Naive thymus-derived CD4-positive, alpha-beta T cell (primary cell): ENCODE measurements at regions of chrX and their contacts with region 1.

Region 1: DNA sequence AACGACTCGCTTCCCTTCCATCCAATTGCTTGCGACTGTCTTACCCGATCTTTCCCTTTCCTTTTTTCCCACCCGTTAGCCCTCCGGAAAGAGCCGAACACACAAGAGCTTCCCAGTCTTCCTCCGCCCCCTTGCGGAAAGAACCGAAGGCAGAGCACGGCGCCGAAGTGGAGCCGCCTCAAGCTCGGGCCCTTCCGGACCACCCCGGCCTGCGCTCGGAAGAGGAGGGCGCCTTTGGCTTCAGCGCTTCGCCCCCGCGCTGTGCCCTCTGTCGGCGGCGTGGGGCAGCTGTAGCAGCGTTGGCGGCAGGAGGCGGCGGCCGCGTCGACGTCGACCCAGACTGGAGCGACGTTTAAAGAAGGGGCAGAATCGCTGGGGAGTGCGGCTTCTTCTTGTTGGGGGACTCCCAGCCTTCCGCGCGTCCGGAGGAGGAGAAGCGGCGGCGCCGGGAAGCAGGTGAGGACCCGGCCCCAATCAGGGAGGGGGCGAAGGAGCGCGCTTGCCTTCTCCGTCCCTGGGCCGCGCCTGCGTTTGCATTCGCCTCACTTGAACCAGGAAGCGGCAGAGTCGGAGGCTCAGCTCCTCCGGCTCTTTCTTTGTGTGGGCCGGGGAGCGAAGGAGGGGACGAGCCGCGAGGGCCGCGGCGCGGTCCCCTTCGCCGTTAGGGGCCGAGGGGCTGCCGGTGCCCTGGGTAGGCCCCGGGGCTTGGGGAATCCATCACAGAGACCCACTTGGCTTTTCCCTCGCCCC is at the start of gene ZBTB33:
- DNase-seq: peak; percentile 69 to 88 (median 82)
- ATAC-seq: peak; percentile 100
- H3K4me3 ChIP-seq: peak within 1 kb of the TSS; percentile 79
- H3K4me3 Mint-ChIP-seq: peak within 1 kb of the TSS; percentile 84 to 97 (median 94)
- H3K27ac ChIP-seq: peak within 1 kb of the TSS; percentile 96
- H3K27ac Mint-ChIP-seq: peak within 1 kb of the TSS; percentile 93 to 98 (median 96)
- H3K4me1 ChIP-seq: peaks cover 0 to 7% of the 10 kb centered on the region in 2 donors
- H3K4me1 Mint-ChIP-seq: peaks cover 6 to 42% (median 28%) of the 10 kb centered on the region in 7 donors
- H3K27me3 ChIP-seq: no peaks in the 10 kb centered on the region
- H3K27me3 Mint-ChIP-seq: peaks cover 0 to 4% (median 0%) of the 10 kb centered on the region in 5 donors
- total RNA-seq, gene ZBTB33: 15.3 to 30.7 (median 26.3) TPM

Region 2: DNA sequence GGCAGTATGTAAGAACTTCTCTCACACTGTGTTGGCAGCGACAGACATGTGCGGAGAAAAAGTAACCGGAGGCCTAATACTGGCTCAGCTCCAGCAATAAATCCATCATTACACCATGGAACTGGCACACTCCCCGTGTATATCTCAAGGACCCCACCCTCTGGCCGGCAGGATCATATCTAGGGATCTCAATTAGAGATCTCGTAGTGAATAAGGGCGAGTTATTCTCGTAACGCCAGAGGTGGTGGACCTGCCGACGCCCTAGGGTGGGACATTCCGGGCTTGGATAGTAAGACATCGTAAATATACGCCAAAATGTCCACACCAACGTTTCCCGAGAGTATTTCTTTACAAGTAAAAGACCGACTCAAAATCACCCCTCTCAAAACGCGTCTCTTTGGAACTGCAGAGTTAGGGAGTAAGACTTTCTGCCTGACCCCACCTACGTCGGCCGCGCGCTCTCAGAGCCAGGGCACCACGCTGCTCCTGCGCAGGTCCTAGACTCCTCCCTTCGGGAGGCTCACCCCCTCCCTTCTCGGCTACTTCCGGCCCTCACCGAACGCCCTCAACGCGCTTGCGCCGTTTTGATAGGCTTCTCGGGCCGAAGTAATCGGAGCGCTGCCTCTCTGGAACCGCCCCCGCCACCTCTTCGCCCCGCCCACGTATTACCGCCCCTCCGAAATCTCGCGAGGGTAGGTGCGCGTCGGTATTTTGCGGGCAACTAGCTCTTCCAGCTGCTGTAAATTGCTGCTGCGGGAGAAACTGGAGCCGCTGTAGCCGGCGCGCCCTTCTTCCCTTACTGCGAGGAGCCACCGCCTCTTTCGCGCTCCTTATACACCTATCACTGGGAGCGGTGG is 1905.1 kb before region 1 on chrX and contains the start of gene WDR44:
- CTCF ChIA-PET with region 1: no interaction called
- POLR2A ChIA-PET with region 1: no interaction called
- intact Hi-C with region 1: loop called in 1 of 2 experiments (anchors 5 kb)
- DNase-seq: peak; percentile 79 to 95 (median 92)
- ATAC-seq: peak; percentile 95
- H3K4me3 ChIP-seq: peak within 1 kb of the TSS; percentile 87
- H3K4me3 Mint-ChIP-seq: peak within 1 kb of the TSS; percentile 87 to 99 (median 98)
- H3K27ac ChIP-seq: peak within 1 kb of the TSS; percentile 93
- H3K27ac Mint-ChIP-seq: peak within 1 kb of the TSS; percentile 92 to 99 (median 96)
- H3K4me1 ChIP-seq: peaks cover 19 to 24% of the 10 kb centered on the region in 2 donors
- H3K4me1 Mint-ChIP-seq: peaks cover 5 to 40% (median 36%) of the 10 kb centered on the region in 7 donors
- H3K27me3 ChIP-seq: no peaks in the 10 kb centered on the region
- H3K27me3 Mint-ChIP-seq: no peaks in the 10 kb centered on the region
- total RNA-seq, gene WDR44: 12.0 to 19.0 (median 17.0) TPM

Region 3: DNA sequence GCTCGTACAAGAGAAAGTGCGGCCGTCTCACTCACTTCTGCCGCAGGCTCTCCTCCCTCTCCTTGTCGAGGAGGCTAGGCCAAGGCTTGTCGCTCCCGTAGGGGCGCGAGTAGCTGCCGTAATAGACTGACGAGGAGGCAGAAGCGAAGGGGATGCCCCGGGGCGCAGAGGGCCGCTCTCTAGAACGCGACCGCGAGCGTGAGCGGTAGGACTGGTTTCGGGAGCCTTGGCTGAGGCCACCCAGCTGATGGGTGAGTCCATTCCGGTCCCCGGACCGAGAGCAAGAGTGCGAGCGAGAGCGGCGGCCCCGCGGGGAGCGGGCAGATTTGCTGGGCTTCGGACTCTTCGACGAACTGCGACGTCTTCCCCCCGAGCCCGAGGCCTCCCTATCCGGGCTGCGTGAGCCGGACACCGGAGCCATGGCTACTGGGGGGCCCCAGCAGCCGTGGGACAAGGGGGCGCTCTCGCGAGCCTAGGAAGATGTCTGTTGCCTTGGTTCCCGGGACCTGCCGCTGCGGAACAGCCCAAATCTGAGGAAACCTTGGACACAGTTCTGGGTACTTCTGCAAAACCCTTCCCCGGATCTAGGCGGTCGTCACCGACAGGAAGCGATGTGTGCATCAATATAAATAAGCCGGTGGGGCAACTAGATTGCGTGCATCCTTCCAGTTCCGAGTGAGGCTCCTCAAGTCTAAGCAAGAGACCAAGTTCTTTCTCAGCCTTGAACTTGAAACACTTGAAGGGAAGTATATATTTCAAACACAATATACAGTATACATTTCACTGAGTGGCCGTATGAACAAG is 307.3 kb before region 1 on chrX and contains the start of gene NKAP:
- CTCF ChIA-PET with region 1: no interaction called
- POLR2A ChIA-PET with region 1: no interaction called
- intact Hi-C with region 1: loop called (anchors 2 kb)
- DNase-seq: peak; percentile 53 to 84 (median 79)
- ATAC-seq: peak; percentile 95
- H3K4me3 ChIP-seq: peak within 1 kb of the TSS; percentile 84
- H3K4me3 Mint-ChIP-seq: peak within 1 kb of the TSS; percentile 84 to 100 (median 97)
- H3K27ac ChIP-seq: peak within 1 kb of the TSS; percentile 97
- H3K27ac Mint-ChIP-seq: peak within 1 kb of the TSS; percentile 84 to 99 (median 94)
- H3K4me1 ChIP-seq: peaks cover 8 to 15% of the 10 kb centered on the region in 2 donors
- H3K4me1 Mint-ChIP-seq: peaks cover 13 to 30% (median 22%) of the 10 kb centered on the region in 7 donors
- H3K27me3 ChIP-seq: no peaks in the 10 kb centered on the region
- H3K27me3 Mint-ChIP-seq: peaks cover 0 to 2% (median 2%) of the 10 kb centered on the region in 5 donors
- total RNA-seq, gene NKAP: 9.7 to 19.3 (median 14.9) TPM

Region 4: DNA sequence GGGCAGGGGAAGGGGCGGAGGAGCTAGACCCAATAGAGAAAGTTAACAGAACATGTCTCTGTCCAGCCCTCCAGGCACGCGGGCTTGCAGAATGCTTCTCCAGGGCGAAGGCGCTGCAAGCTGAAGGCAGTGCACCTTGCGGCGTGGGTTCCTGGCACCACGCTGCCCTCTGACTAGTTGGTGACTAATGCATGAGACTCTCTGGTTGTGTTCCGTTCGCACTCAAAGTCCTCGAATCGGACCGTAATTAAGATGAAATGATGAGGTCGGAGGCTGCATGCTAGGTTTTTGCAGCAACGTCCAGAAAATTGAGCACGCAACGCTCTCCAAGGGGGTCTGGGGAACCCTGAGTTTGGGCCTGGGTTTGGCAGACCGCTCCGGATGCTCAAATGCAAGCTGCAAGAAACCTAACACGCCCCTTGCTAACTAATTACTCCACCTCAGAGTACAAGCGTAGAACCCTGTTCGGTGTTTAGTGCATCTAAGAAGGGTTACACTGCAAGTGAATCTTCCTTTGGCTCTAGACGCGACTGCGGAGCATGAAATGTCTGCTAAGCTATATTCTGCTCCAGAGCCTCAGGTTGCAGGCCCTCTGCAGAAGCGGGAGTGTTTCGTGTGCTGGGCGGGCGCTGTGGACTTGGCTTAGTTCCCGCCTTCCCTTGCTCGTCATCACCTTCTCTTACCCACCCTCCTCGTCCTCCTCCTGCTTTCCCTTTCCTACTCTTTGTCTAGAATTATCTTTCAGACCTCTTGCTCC is 250.0 kb before region 1 on chrX:
- CTCF ChIA-PET with region 1: no interaction called
- POLR2A ChIA-PET with region 1: no interaction called
- intact Hi-C with region 1: no loop called
- DNase-seq: no peak
- ATAC-seq: no peak
- H3K4me3 ChIP-seq: no peak overlapping the region
- H3K4me3 Mint-ChIP-seq: peak overlapping the region; percentile 14 to 86 (median 67)
- H3K27ac ChIP-seq: no peak overlapping the region
- H3K27ac Mint-ChIP-seq: peak overlapping the region in 1 of 9 donors; percentile 59
- H3K4me1 ChIP-seq: no peaks in the 10 kb centered on the region
- H3K4me1 Mint-ChIP-seq: peaks cover 0 to 18% (median 9%) of the 10 kb centered on the region in 7 donors
- H3K27me3 ChIP-seq: peaks cover 0 to 5% of the 10 kb centered on the region in 2 donors
- H3K27me3 Mint-ChIP-seq: peaks cover 32 to 73% (median 52%) of the 10 kb centered on the region in 5 donors

Region 5: DNA sequence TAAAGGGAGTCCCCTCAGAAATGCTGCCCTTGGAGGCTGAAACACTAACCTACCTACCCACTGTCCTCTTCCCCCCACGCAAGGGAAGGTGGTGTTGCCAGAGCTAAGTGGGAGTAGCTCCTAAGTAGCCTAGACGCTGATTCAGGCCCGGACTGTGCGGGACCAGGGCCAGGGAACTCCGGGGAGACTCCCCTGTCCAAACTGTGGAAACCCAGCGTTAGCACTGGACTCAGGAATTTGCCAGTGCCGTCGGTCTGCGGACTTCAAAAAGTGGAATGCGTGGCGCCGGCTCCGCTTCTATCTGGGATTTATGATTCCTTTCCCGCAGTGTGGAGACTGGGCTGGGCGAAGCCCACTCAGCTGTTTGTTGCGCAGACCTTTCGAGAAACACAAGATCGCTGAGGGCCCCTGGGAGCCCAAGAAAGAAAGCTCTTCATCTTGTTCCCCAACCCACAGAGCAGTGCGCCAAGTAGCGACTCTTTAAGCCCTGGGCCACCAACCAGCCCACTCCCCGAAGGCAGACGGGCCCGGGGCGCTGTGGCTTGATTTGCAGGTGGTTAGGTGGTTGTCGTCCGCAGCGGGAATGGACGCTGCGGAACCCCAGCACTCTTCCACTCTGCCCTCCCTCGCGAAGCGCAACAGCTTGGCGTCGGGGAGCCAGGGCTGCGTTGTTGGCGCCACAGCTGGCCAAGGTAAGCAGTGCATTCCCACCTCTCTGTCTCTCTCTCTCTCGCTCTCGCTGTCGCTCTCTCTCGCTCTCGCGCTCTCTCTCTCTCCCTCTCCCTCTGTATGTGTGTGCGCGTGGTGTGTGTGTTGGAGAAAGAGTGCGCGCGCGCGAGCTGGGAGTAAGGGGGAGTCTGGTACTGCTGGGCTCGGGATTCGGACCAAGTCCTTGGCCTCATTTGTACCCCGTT is 58.5 kb after region 1 on chrX:
- CTCF ChIA-PET with region 1: interaction called, 8 read pairs
- POLR2A ChIA-PET with region 1: interaction called, 15 read pairs
- intact Hi-C with region 1: loop called (anchors 1 kb)
- DNase-seq: peak; percentile 39 to 78 (median 63)
- ATAC-seq: peak; percentile 97
- H3K4me3 ChIP-seq: peak overlapping the region; percentile 74
- H3K4me3 Mint-ChIP-seq: peak overlapping the region; percentile 81 to 91 (median 87)
- H3K27ac ChIP-seq: no peak overlapping the region
- H3K27ac Mint-ChIP-seq: peak overlapping the region; percentile 18 to 96 (median 88)
- H3K4me1 ChIP-seq: peaks cover 0 to 2% of the 10 kb centered on the region in 2 donors
- H3K4me1 Mint-ChIP-seq: peaks cover 8 to 31% (median 15%) of the 10 kb centered on the region in 7 donors
- H3K27me3 ChIP-seq: peaks cover 0 to 3% of the 10 kb centered on the region in 2 donors
- H3K27me3 Mint-ChIP-seq: peaks cover 16 to 78% (median 26%) of the 10 kb centered on the region in 5 donors

Region 6: DNA sequence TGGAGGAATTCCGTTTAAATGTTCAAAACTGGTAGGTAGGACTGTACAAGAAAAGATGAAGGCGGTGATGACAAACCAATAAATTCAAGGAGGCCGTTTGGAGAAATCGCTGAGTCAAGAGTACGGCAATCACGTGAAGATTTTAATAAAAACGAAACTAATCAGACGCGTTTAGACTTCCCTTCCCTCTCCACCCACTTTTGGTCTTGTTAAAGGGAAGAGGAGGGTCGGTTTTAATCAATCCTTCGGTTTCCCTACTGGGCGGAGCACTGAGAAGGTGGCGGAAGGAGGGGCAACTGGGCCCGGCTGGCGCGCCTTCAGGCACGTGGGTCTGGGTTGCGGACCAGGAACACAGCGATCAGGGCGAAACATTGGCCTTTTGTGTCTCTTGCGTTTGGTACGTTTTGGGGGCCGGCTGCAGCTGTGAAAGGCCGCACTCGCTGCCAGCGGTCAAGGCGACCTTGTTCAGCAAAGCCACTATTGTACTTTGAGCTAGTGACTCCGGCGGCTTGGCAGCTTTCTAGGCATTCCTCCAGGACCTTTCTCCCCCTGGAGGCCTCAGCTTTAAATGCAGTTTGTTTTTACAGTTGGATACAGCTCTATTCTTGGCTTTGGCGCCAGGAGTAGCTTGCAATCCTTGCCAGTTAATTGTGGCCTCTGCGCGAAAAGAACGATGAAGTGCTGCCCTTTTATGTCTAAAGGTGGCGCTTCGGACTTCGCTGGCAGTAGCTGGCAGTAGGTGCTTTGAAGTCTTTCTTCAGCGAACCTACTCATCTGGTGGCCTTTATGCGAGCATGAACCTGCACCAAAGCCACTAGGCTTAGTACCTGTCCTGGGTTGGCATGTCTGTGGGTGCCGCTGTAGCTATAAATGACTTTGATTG is 235.2 kb after region 1 on chrX:
- CTCF ChIA-PET with region 1: no interaction called
- POLR2A ChIA-PET with region 1: no interaction called
- intact Hi-C with region 1: loop called (anchors 2 to 5 kb)
- DNase-seq: peak; percentile 21 to 52 (median 43)
- ATAC-seq: peak; percentile 83
- H3K4me3 ChIP-seq: peak overlapping the region; percentile 89
- H3K4me3 Mint-ChIP-seq: peak overlapping the region; percentile 81 to 94 (median 89)
- H3K27ac ChIP-seq: peak overlapping the region; percentile 69
- H3K27ac Mint-ChIP-seq: peak overlapping the region; percentile 81 to 96 (median 91)
- H3K4me1 ChIP-seq: peaks cover 9 to 18% of the 10 kb centered on the region in 2 donors
- H3K4me1 Mint-ChIP-seq: peaks cover 5 to 28% (median 19%) of the 10 kb centered on the region in 7 donors
- H3K27me3 ChIP-seq: no peaks in the 10 kb centered on the region
- H3K27me3 Mint-ChIP-seq: no peaks in the 10 kb centered on the region